H1 (cell line): ENCODE measurements at regions of chr22 and their contacts with region 1.

Region 1: DNA sequence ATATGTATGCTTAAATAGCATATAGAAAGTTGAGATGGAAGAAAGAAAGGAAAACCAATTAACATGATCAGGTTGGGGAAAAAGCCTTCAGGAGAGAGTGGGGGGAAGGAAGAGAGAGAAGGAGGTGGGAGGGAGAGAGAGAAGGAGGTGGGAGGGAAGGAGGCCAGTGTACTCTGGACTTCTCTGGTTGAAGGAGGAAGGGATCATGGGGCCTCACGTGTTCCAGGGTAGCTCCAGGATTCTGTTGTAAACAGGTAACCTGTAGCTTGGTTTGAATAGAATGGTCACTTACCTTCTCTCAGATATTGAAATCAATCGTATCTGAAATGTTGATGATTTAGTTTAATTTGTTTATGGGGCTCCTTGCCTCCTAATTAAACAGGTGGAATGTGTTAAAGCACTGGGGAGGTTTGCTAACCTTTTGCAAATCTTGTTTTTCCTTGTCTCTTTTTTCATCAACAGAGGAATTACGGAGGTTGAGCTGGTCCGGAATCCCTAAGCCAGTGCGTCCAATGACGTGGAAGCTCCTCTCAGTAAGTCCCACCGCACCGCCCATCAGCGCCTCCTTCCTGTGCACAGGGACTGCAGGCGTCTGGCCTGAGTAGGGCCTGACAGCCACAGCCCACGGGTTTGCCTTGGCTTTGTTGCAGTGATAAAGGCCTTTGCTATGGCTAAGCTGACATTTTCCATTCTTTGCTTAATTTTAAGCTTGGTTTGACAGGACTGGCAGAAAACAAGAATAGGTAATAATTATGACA is 115.9 kb downstream of the TBC1D22A start:
- DNase-seq: no peak
- H3K4me3 ChIP-seq: no peak overlapping the region
- H3K27ac ChIP-seq: no peak overlapping the region
- H3K4me1 ChIP-seq: peaks cover 0 to 5% (median 0%) of the 10 kb centered on the region in 4 experiments; a peak in 2 of 7 replicates
- H3K27me3 ChIP-seq: no peaks in the 10 kb centered on the region
- CTCF ChIP-seq: peak in 2 of 3 experiments; percentile 36 to 44; a peak in 2 of 4 replicates
- EP300 ChIP-seq: no peak
- POLR2A ChIP-seq: no peak
- RAD21 ChIP-seq: 0 out of 4 replicates have a peak, but pooled peaks of 1 of the 2 experiments have one; percentile 15

Region 2: DNA sequence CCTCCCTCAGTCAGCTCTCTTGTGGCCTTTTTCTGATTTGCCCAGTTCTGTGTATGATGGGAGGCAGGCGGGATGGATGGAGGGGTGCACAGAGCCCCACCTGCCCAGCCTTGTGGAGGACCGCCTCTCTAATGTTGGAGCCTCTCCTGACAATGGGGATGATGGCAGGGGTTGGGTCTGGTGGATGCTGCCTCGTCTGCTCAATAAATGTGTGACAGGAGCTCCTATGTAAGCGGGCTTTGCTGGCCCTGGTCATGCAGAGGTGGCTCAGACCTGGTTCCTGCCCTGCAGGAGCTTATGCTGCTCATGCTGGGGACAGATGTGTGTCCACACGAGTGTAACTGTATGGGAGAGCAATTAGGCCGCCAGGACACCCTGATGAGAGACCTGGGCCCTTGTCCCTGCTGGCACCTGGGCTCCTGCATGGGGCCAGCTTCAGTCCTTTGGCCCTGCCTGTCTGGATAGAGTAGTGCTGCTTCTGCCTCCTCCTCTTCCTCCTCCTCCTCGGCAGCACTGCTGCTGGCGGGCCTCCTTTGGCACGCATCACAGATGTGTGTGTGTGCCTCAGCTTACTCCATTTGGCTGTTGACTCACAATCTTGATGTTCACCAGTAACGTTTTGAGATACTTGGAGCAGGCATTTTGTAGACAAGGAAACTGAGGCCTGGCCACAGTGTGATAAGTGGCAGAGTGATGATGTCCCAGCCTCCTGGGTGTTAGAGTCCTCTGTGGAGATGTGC is 15.1 kb after region 1 on chr22:
- CTCF ChIA-PET with region 1: interaction called, 16 read pairs
- POLR2A ChIA-PET with region 1: no interaction called
- DNase-seq: no peak
- H3K4me3 ChIP-seq: no peak overlapping the region
- H3K27ac ChIP-seq: no peak overlapping the region
- H3K4me1 ChIP-seq: no peaks in the 10 kb centered on the region; a peak in 1 of 7 replicates
- H3K27me3 ChIP-seq: no peaks in the 10 kb centered on the region
- CTCF ChIP-seq: no peak
- EP300 ChIP-seq: no peak
- POLR2A ChIP-seq: no peak
- RAD21 ChIP-seq: no peak